Motor neuron (in vitro differentiated cells): ENCODE measurements at regions of chr14 and their contacts with region 1.

Region 1: DNA sequence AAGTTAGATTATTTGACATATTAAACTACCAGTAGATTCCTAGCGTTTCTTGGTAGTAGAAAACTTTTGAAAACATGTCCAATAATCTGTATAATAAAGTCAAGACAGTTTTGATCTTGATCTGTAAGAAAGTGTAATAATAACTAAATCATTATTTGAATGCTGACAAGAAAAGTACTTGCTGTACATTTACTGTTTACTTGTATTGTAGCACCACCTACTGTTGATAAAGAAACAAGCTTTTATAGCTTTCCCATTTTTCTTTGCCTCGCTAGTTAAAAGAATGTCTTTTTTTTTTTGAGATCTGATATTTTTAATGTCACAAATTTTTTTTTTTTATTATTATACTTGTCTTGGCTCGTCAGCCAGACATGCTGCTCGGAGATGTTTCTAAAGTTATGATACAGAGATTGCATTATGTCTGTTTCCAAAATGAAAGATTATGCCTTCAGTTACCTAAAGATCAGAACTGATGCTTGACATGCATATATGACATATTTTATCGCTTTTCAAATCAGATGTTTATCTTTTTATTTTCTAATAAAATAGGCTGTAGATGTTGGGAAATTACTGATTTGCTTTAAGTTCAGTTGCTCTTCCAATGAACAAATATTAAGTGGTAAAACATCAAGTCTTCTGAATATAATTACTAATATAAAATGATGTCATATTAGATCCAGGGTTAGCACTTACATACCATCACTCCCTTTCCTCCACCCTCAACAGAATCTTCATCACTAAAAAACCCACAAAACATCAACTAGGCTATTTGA is 140.5 kb downstream of the AKAP6 start:
- ATAC-seq: peak in 3 of 8 experiments; percentile 41 to 65 (median 55)
- H3K4me3 ChIP-seq: no peak overlapping the region
- H3K27ac ChIP-seq: no peak overlapping the region
- H3K4me1 ChIP-seq: peaks cover 12 to 16% of the 10 kb centered on the region in 2 donors

Region 2: GRCh38 chr14:31937721-31938346 is 531.7 kb before region 1 on chr14:
- in situ Hi-C with region 1: loop called in 1 of 9 experiments (anchors 25 kb)
- ATAC-seq: peak in 7 of 8 experiments; percentile 89 to 98 (median 93)
- H3K4me3 ChIP-seq: no peak overlapping the region
- H3K27ac ChIP-seq: no peak overlapping the region
- H3K4me1 ChIP-seq: peaks cover 12 to 14% of the 10 kb centered on the region in 2 donors

Region 3: DNA sequence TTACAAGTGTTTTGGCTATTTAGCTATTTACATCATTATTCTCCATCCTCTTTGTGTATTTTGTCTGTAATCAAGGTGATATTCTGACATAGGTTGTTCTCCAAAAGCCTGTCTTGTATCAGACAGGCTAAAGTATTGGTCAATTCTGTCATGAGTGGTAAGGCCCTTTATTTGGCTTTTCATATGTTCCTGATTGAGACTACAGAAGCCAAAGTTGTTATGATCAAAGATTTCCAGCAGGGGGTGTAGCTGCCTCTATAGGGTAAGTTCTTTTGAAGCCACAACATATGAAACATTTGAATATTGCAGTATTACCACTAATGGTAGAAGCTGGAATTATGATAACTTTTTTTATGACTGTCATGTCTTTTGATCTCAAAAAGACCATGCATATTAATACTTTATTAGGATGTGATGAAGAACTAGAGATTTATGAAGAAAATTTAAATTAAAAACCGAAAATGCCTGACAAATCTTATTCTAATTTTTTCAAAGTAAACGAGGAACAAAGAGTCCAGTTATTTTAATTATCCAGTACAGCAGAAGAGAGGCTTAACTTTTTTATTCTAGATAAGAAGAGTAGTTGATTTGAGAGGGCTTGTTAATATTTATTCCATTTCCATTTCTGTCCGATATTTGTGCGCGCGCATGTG is 395.9 kb before region 1 on chr14:
- in situ Hi-C with region 1: loop called in 1 of 9 experiments (anchors 25 kb)
- ATAC-seq: no peak
- H3K4me3 ChIP-seq: no peak overlapping the region
- H3K27ac ChIP-seq: no peak overlapping the region
- H3K4me1 ChIP-seq: peaks cover 0 to 3% of the 10 kb centered on the region in 2 donors

Region 4: DNA sequence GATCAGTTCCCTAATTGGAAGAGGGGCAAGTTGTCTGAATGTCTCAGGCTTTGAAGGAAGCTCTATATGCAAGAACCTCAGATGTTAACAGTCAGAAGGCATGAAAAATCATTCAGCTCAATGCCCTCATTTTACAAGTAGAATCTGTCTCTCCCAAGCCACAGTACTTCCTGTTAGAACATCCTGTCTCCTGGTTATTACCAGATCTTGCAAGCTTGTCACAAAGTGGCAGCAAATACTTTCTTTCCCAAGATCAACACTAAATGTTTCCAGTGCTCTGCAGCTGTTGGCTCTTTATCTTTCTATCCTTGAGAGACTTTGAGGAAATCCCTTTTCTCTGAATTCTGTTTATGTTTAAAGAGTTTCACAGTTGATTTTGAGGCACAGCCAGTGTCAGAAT is 95.0 kb after region 1 on chr14:
- in situ Hi-C with region 1: no loop called
- ATAC-seq: peak in 1 of 8 experiments; percentile 39
- H3K4me3 ChIP-seq: no peak overlapping the region
- H3K27ac ChIP-seq: no peak overlapping the region
- H3K4me1 ChIP-seq: peaks cover 0 to 3% of the 10 kb centered on the region in 2 donors